Activated CD4-positive, alpha-beta T cell treated with anti-CD3 and anti-CD28 coated beads for 36 hours (primary cell): ENCODE measurements at regions of chr14 and their contacts with region 1.

Region 1: GRCh38 chr14:51846631-51847488 is 13.6 kb upstream of the GNG2 start:
- DNase-seq: peak; percentile 91
- ATAC-seq: peak; percentile 76
- H3K4me3 Mint-ChIP-seq: peak overlapping the region; percentile 80
- H3K27ac Mint-ChIP-seq: peak overlapping the region; percentile 99
- H3K4me1 Mint-ChIP-seq: peaks cover 78% of the 10 kb centered on the region
- H3K27me3 Mint-ChIP-seq: no peaks in the 10 kb centered on the region

Region 2: DNA sequence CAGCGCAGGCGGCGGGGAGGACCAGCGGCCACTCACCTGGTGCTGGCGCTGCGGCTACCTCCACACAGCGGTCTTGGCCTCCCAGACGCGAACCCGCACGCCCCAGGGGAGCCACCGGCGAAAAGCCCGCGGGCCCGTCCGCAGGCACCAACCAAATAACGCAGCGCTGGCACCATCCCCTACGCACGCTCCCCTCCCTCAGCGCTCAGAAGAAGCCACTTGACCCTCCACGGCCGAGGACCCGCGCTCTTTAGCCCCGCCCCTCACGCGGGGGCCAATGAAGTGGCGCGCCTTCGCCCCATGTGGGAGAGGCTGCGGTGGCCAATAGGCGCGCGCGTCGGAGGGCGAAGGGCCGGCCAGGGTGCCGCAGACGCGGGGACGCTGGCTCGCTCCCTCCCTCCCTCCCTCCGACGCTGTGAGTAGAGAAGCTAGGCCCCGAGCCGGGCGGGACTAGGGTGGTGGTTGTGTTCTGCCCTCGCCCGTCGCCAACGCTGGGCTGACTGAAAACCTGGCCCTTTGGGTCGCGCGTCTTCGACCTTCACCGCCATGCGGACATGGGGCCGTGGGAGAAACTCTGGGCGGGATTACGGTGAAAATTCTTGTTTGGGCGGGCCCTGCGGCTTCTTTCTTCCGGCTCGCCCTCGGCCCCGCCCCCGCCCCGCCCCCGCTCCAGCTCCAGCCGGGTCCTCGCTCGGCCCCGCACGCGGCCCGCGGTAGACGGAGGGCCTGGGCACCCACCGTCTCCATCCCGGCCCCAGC is 1534.7 kb before region 1 on chr14 and contains the starts of genes DMAC2L and L2HGDH:
- CTCF ChIA-PET with region 1: no interaction called
- POLR2A ChIA-PET with region 1: no interaction called
- intact Hi-C with region 1: loop called in 1 of 2 experiments (anchors 5 kb)
- DNase-seq: peak; percentile 93
- ATAC-seq: peak; percentile 95
- H3K4me3 Mint-ChIP-seq: peak within 1 kb of the TSS; percentile 85
- H3K27ac Mint-ChIP-seq: peak within 1 kb of the TSS; percentile 95
- H3K4me1 Mint-ChIP-seq: peaks cover 41% of the 10 kb centered on the region
- H3K27me3 Mint-ChIP-seq: no peaks in the 10 kb centered on the region
- total RNA-seq, gene DMAC2L: 7.4 to 12.6 TPM
- total RNA-seq, gene L2HGDH: 12.8 to 19.0 TPM

Region 3: GRCh38 chr14:51228890-51229289 is 618.0 kb before region 1 on chr14:
- CTCF ChIA-PET with region 1: no interaction called
- POLR2A ChIA-PET with region 1: no interaction called
- intact Hi-C with region 1: no loop called
- DNase-seq: no peak
- ATAC-seq: no peak
- H3K4me3 Mint-ChIP-seq: no peak overlapping the region
- H3K27ac Mint-ChIP-seq: no peak overlapping the region
- H3K4me1 Mint-ChIP-seq: no peaks in the 10 kb centered on the region
- H3K27me3 Mint-ChIP-seq: no peaks in the 10 kb centered on the region

Region 4: DNA sequence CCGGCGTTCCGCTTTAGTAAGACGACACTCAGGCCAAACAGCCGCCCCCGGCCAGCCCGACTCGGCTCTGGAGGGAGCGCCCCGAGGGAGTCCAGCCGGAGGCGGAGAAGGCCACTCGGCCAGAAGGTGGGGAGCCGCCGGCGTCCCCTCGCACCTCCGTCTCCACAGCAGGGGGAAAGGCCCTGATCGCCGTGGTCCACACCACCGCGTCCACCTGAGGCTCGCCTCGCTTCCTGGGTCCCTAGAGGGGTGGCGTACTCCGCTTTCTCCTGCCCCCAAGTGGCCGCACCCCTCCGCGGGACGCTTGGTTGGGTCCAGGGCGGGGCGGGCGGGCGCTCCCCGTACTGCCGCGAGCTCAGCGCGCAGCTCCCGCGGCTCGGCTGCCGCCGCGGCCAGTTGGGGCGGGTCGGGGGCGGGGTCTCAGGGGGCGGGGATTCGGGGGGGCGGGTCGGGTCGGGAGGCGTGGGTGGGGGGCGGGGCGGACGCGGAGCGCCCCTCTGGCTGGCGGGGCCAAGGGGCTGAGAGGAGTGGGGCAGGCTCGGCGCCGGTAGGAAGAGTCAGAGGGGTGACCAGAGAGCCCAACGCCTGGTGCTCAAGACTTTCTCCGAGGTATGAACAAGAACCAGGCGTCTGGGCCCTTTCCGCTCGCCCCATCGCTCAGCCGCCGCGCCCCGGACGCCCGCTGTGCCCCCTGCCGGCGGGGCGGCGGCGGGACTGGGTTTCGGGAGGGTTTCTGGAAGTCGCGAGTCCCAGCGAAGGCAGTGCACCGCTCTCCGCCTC is 195.3 kb before region 1 on chr14 and contains the start of gene FRMD6:
- CTCF ChIA-PET with region 1: no interaction called
- POLR2A ChIA-PET with region 1: no interaction called
- intact Hi-C with region 1: loop called (anchors 1 to 2 kb)
- DNase-seq: peak; percentile 90
- ATAC-seq: peak; percentile 86
- H3K4me3 Mint-ChIP-seq: peak within 1 kb of the TSS; percentile 80
- H3K27ac Mint-ChIP-seq: peak within 1 kb of the TSS; percentile 79
- H3K4me1 Mint-ChIP-seq: peaks cover 19% of the 10 kb centered on the region
- H3K27me3 Mint-ChIP-seq: peaks cover 12% of the 10 kb centered on the region
- total RNA-seq, gene FRMD6: 7.5 to 8.0 TPM

Region 5: GRCh38 chr14:51828017-51828797 is 18.7 kb before region 1 on chr14:
- CTCF ChIA-PET with region 1: interaction called, 7 read pairs
- POLR2A ChIA-PET with region 1: interaction called, 7 read pairs
- intact Hi-C with region 1: loop called (anchors 1 kb)
- DNase-seq: peak; percentile 88
- ATAC-seq: peak; percentile 99
- H3K4me3 Mint-ChIP-seq: peak overlapping the region; percentile 11
- H3K27ac Mint-ChIP-seq: peak overlapping the region; percentile 62
- H3K4me1 Mint-ChIP-seq: no peaks in the 10 kb centered on the region
- H3K27me3 Mint-ChIP-seq: no peaks in the 10 kb centered on the region

Region 6: GRCh38 chr14:51873221-51873893 is 26.5 kb after region 1 on chr14:
- CTCF ChIA-PET with region 1: interaction called, 4 read pairs
- POLR2A ChIA-PET with region 1: interaction called, 9 read pairs
- intact Hi-C with region 1: loop called (anchors 1 kb)
- DNase-seq: peak; percentile 63
- ATAC-seq: peak; percentile 83
- H3K4me3 Mint-ChIP-seq: peak overlapping the region; percentile 42
- H3K27ac Mint-ChIP-seq: peak overlapping the region; percentile 79
- H3K4me1 Mint-ChIP-seq: peaks cover 62% of the 10 kb centered on the region
- H3K27me3 Mint-ChIP-seq: no peaks in the 10 kb centered on the region

Region 7: GRCh38 chr14:51922624-51923023 is 75.8 kb after region 1 on chr14:
- CTCF ChIA-PET with region 1: no interaction called
- POLR2A ChIA-PET with region 1: no interaction called
- intact Hi-C with region 1: no loop called
- DNase-seq: no peak
- ATAC-seq: no peak
- H3K4me3 Mint-ChIP-seq: no peak overlapping the region
- H3K27ac Mint-ChIP-seq: peak overlapping the region; percentile 30
- H3K4me1 Mint-ChIP-seq: peaks cover 47% of the 10 kb centered on the region
- H3K27me3 Mint-ChIP-seq: no peaks in the 10 kb centered on the region

Region 8: DNA sequence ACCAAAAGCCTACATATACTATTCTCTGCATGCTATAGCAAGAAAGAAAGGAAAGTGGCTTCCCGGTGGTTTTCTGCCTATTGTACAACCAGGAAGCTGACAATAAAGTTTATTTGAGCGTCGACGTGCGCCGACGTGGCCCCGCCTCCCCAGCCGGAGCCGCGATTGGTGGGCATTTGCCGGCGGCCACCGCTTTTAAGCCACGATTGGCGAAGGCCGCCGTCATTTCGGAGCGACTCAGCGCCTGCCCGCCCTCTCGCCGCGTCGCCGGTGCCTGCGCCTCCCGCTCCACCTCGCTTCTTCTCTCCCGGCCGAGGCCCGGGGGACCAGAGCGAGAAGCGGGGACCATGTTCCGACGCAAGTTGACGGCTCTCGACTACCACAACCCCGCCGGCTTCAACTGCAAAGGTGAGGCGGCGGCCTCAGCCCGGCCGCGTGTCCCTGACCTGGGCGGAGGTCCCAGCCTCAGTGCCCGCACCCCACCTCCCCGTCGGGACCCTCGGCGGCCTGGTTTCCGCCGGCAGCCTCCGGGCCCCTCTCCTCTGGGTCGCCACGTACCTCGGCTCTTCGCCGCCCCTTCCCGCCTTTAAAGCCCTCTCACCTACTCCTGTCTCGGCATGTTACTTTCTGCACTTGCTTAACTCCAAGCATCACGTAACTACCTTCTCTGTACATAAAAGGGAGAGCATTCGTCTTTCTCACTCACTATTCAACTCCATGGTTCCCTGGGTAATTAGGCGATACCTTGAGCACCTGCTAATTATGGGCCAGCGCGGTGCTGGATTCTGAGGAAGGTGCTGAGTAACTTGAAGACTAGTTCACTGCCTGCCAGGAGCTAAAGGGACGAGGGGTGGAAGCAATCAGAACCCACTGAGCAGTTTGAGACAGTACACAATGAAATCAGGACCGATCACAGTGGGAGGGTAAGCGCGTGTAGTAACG is 142.7 kb after region 1 on chr14 and contains the start of gene RTRAF:
- CTCF ChIA-PET with region 1: no interaction called
- POLR2A ChIA-PET with region 1: no interaction called
- intact Hi-C with region 1: loop called (anchors 1 to 5 kb)
- DNase-seq: peak; percentile 96
- ATAC-seq: peak; percentile 97
- H3K4me3 Mint-ChIP-seq: peak within 1 kb of the TSS; percentile 100
- H3K27ac Mint-ChIP-seq: peak within 1 kb of the TSS; percentile 98
- H3K4me1 Mint-ChIP-seq: peaks cover 40% of the 10 kb centered on the region
- H3K27me3 Mint-ChIP-seq: no peaks in the 10 kb centered on the region
- total RNA-seq, gene RTRAF: 232 to 254 TPM

Region 9: GRCh38 chr14:52552063-52552988 is 705.5 kb after region 1 on chr14 and contains the starts of genes GPR137C and TXNDC16:
- CTCF ChIA-PET with region 1: no interaction called
- POLR2A ChIA-PET with region 1: no interaction called
- intact Hi-C with region 1: loop called in 1 of 2 experiments (anchors 1 kb)
- DNase-seq: peak; percentile 100
- ATAC-seq: peak; percentile 96
- H3K4me3 Mint-ChIP-seq: peak within 1 kb of the TSS; percentile 85
- H3K27ac Mint-ChIP-seq: peak within 1 kb of the TSS; percentile 86
- H3K4me1 Mint-ChIP-seq: peaks cover 18% of the 10 kb centered on the region
- H3K27me3 Mint-ChIP-seq: peaks cover 4% of the 10 kb centered on the region
- total RNA-seq, gene GPR137C: 0.04 to 0.14 TPM
- total RNA-seq, gene TXNDC16: 4.0 to 5.2 TPM